Activated T-helper 2 cell treated with anti-CD3 and anti-CD28 coated beads, Interferon-gamma antibody, Interleukin-2, Interleukin-4, amounts not matched to agents 10 μg/mL and 5 μg/mL and 100 μg/mL, durations not matched to agents 14 hours and 24 hours and 36 hours (primary cell): ENCODE measurements at regions of chr7 and their contacts with region 1.

Region 1: DNA sequence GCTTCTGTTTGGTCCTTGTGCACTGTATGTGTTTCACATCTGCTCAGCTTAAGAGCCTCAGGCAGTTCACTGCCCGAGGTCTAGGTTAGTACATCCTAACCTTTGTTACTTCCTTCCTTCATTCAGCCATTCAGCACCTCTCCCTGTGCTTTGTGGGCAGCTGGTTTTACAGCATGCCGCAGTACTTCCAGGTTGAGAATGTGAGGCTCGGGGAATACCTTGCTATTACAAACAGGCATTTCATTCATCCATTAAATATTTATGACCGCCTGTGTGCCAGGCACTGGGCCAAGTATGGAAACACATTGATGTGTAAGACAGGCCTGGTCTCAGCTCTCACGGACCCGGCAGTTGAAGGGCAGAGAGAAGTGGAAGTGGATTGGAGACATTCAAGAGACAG is 82.4 kb downstream of the SHH start:
- DNase-seq: no peak
- H3K4me3 Mint-ChIP-seq: no peak overlapping the region
- H3K27ac Mint-ChIP-seq: no peak overlapping the region
- H3K4me1 Mint-ChIP-seq: peaks cover 30% of the 10 kb centered on the region
- H3K27me3 Mint-ChIP-seq: no peaks in the 10 kb centered on the region

Region 2: DNA sequence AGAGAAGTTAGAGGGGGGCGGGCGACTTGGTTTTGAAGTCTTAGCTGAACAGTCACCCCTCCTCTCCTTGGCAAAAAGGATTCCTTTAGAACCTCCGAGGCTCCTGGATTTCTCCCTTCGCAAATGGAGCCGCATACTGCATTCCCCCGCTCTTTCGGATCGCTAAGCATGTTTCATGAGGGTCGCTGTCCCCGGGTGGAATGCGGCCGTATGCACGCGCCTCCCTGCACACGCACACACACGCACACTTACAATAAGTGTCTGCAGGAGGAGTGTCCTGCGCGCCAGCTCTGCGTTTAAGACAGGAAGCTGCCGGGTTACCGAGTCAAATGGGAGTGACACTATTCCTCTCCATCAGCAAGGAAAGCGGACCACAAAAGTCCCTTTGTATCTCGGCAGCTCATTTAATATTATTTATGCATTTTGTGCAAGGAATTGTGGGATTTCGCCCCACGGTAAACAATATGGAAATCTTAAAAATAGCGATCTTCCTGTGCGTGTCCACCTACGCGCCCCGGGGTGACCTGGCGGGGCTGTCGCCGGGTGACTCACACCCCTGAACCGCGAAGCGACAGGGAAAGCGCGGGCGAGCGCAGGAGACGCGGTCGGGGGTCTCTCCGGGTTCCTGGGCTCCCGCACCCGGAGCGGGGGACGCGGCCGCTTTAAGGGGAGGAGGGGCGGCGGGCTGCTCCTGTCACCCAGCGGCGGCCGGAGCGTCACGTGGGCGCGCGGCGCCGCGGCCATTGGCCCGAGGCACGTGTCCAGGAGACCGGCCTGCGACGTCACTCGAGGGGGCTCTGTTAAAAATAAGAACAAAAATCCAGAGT is 272.9 kb before region 1 on chr7:
- intact Hi-C with region 1: no loop called
- DNase-seq: no peak
- H3K4me3 Mint-ChIP-seq: peak overlapping the region; percentile 37
- H3K27ac Mint-ChIP-seq: peak overlapping the region; percentile 67
- H3K4me1 Mint-ChIP-seq: peaks cover 9% of the 10 kb centered on the region
- H3K27me3 Mint-ChIP-seq: peaks cover 68% of the 10 kb centered on the region

Region 3: DNA sequence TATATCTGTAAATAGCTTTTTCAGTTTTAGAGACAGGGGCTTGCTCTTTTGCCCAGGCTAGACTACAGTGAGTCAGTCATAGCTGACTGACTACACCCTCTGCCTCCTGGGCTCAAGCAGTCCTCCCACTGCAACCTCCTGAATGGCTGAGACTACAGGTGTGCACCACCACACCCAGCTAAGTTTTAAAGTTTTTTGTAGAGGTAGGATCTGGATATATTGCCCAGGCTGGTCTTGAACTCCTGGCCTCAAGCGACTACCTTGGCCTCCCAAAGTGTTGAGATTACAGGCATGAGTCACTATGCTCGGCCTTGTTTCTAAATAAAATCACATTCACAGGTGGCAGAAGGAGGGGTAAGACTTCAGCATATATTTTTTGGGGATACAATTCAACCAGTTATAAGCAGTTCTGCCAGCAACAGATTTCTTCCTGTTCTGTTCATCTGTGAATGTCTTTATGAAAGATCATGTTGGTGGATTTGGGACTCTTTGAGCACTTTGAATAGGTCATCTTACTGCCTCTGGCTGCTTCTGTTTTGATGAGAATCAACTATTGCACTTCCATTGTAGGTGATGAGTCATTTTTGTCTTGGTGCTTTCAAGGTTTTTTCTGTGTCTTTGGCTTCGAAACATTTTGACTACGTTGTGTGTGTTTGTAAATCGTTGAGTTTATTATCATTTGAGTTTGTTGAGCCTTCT is 69.6 kb before region 1 on chr7:
- intact Hi-C with region 1: loop called (anchors 1 kb)
- DNase-seq: no peak
- H3K4me3 Mint-ChIP-seq: no peak overlapping the region
- H3K27ac Mint-ChIP-seq: peak overlapping the region; percentile 95
- H3K4me1 Mint-ChIP-seq: peaks cover 51% of the 10 kb centered on the region
- H3K27me3 Mint-ChIP-seq: no peaks in the 10 kb centered on the region

Region 4: DNA sequence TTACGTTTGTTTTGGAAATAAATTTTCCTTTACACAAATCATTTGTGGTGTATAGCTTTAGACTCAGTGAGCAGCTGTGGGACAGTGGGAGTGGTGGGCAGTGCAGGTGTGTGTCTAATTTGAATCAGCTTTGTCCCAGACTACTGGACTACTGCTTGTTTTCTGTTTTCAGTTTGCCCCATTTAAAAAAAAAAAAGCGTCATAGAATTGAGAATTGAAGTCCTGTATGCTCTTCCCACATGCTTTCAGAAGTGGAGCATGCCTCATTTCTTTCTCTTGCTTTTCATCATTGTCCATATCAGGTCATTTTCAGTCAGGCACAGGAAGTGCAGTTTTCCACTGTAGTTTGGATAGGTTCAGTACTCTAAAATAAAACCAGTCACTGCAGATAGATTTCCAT is 16.4 kb after region 1 on chr7:
- intact Hi-C with region 1: loop called (anchors 1 kb)
- DNase-seq: no peak
- H3K4me3 Mint-ChIP-seq: peak overlapping the region; percentile 45
- H3K27ac Mint-ChIP-seq: peak overlapping the region; percentile 82
- H3K4me1 Mint-ChIP-seq: peaks cover 61% of the 10 kb centered on the region
- H3K27me3 Mint-ChIP-seq: no peaks in the 10 kb centered on the region